Activated B cell treated with CpG ODN at 0.5 μM for 24 hours (primary cell): ENCODE measurements at regions of chr11 and their contacts with region 1.

Region 1: DNA sequence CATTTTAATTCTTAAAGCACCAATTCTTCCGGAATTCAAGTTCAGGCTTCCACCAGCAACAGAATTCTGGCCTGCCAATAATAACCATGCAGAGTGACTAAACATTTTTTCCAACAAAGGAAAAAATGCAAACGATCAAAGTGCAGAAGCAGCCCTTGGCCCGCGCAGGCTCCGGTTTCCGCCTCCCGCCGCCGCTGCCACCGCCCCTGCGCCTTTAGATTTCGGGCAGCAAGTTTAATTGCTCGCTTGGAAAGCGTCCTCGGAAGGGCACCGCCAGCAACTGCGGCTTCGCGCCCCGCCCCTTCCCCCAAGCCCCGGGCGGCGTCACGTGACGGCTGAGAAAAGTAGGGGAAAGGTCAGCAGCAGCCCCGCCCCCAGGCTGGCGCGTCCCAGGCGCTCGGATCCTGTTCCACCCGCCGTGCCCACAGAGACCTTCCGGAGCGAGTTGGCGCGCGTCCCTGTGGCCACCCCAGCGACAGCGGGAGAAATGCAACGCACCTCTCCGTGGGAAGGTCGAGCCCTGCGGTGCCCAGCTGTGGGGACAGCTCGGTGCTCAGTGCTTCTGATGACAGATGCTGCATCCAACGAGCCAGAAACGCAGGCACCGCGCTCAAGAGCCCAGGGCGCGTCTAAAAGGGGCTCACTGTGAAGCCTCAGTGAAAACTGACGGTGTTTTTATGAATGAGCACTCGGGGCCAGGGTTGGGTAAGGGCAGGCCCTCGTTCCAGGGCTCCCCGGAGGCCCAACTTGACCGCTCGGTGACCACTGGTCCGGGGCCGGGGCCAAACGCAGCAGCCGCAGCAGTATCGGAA is 2.5 kb downstream of the CPT1A start:
- DNase-seq: peak; percentile 94
- ATAC-seq: peak; percentile 62
- H3K4me3 Mint-ChIP-seq: peak overlapping the region; percentile 85
- H3K27ac Mint-ChIP-seq: peak overlapping the region; percentile 91
- H3K4me1 Mint-ChIP-seq: peaks cover 54% of the 10 kb centered on the region
- H3K27me3 Mint-ChIP-seq: no peaks in the 10 kb centered on the region
- CTCF ChIP-seq: no peak

Region 2: DNA sequence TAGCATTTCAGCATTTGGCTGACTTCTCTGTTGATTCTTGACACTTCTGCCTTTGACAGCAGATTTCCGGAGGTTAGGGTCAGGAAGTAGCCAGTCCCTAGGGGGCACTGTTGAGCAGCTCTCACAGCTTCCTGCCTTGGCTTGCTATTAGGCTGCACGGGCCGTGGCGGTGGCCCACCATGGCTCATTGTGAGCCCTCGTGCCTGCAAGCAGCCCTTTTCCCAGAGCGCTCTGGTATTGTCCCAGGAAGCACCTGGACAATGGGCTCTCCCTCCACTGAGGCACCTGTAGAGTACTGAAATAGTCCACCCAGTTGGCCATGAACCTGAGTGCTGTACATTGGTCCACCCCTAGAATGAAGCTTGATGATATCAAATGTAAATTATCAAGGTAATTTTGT is 255.2 kb before region 1 on chr11:
- CTCF ChIA-PET with region 1: interaction called, 23 read pairs
- POLR2A ChIA-PET with region 1: interaction called, 3 read pairs
- intact Hi-C with region 1: loop called (anchors 1 kb)
- DNase-seq: peak; percentile 33
- ATAC-seq: peak; percentile 64
- H3K4me3 Mint-ChIP-seq: no peak overlapping the region
- H3K27ac Mint-ChIP-seq: no peak overlapping the region
- H3K4me1 Mint-ChIP-seq: peaks cover 16% of the 10 kb centered on the region
- H3K27me3 Mint-ChIP-seq: no peaks in the 10 kb centered on the region
- CTCF ChIP-seq: peak; percentile 27

Region 3: GRCh38 chr11:68617925-68618809 is 221.1 kb before region 1 on chr11:
- CTCF ChIA-PET with region 1: no interaction called
- POLR2A ChIA-PET with region 1: no interaction called
- intact Hi-C with region 1: no loop called
- DNase-seq: no peak
- ATAC-seq: no peak
- H3K4me3 Mint-ChIP-seq: no peak overlapping the region
- H3K27ac Mint-ChIP-seq: no peak overlapping the region
- H3K4me1 Mint-ChIP-seq: no peaks in the 10 kb centered on the region
- H3K27me3 Mint-ChIP-seq: no peaks in the 10 kb centered on the region
- CTCF ChIP-seq: no peak

Region 4: GRCh38 chr11:68751004-68751856 is 88.0 kb before region 1 on chr11 and contains the start of gene TESMIN:
- CTCF ChIA-PET with region 1: interaction called, 7 read pairs
- POLR2A ChIA-PET with region 1: interaction called, 3 read pairs
- intact Hi-C with region 1: loop called (anchors 1 kb)
- DNase-seq: peak; percentile 90
- ATAC-seq: peak; percentile 99
- H3K4me3 Mint-ChIP-seq: peak within 1 kb of the TSS; percentile 77
- H3K27ac Mint-ChIP-seq: no peak within 1 kb of the TSS
- H3K4me1 Mint-ChIP-seq: peaks cover 11% of the 10 kb centered on the region
- H3K27me3 Mint-ChIP-seq: no peaks in the 10 kb centered on the region
- CTCF ChIP-seq: no peak
- total RNA-seq, gene TESMIN: 1.8 and 3.0 TPM in 2 replicates

Region 5: DNA sequence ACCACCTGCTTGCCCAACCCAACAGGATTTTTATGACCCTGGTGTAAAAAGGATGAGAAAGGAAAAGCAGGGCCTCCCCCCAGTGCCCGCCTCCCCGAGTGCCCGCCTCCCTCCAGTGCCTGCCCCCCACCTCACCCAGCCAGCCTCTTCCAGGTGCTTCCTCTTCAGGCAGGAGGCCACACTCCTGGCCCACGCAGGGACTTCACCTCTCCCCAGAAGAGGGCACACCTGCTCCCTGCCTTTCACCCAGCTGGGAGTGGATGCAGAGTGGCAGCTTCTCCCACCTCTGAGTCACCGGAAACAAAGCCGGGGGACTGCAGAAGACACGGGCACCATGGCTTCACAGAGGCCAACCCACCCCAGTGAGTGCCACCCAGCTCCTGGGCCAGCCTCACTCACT is 13.7 kb before region 1 on chr11:
- CTCF ChIA-PET with region 1: interaction called, 41 read pairs
- POLR2A ChIA-PET with region 1: interaction called, 17 read pairs
- intact Hi-C with region 1: loop called (anchors 1 kb)
- DNase-seq: peak; percentile 50
- ATAC-seq: peak; percentile 77
- H3K4me3 Mint-ChIP-seq: no peak overlapping the region
- H3K27ac Mint-ChIP-seq: no peak overlapping the region
- H3K4me1 Mint-ChIP-seq: peaks cover 45% of the 10 kb centered on the region
- H3K27me3 Mint-ChIP-seq: no peaks in the 10 kb centered on the region
- CTCF ChIP-seq: no peak

Region 6: GRCh38 chr11:69040581-69041260 is 201.5 kb after region 1 on chr11:
- CTCF ChIA-PET with region 1: no interaction called
- POLR2A ChIA-PET with region 1: no interaction called
- intact Hi-C with region 1: no loop called
- DNase-seq: no peak
- ATAC-seq: peak; percentile 58
- H3K4me3 Mint-ChIP-seq: no peak overlapping the region
- H3K27ac Mint-ChIP-seq: peak overlapping the region; percentile 12
- H3K4me1 Mint-ChIP-seq: peaks cover 14% of the 10 kb centered on the region
- H3K27me3 Mint-ChIP-seq: peaks cover 15% of the 10 kb centered on the region
- CTCF ChIP-seq: no peak

Region 7: GRCh38 chr11:69055598-69056516 is 216.6 kb after region 1 on chr11:
- CTCF ChIA-PET with region 1: no interaction called
- POLR2A ChIA-PET with region 1: interaction called, 5 read pairs
- intact Hi-C with region 1: loop called (anchors 1 kb)
- DNase-seq: peak; percentile 78
- ATAC-seq: peak; percentile 87
- H3K4me3 Mint-ChIP-seq: peak overlapping the region; percentile 69
- H3K27ac Mint-ChIP-seq: peak overlapping the region; percentile 86
- H3K4me1 Mint-ChIP-seq: peaks cover 58% of the 10 kb centered on the region
- H3K27me3 Mint-ChIP-seq: no peaks in the 10 kb centered on the region
- CTCF ChIP-seq: no peak

Region 8: DNA sequence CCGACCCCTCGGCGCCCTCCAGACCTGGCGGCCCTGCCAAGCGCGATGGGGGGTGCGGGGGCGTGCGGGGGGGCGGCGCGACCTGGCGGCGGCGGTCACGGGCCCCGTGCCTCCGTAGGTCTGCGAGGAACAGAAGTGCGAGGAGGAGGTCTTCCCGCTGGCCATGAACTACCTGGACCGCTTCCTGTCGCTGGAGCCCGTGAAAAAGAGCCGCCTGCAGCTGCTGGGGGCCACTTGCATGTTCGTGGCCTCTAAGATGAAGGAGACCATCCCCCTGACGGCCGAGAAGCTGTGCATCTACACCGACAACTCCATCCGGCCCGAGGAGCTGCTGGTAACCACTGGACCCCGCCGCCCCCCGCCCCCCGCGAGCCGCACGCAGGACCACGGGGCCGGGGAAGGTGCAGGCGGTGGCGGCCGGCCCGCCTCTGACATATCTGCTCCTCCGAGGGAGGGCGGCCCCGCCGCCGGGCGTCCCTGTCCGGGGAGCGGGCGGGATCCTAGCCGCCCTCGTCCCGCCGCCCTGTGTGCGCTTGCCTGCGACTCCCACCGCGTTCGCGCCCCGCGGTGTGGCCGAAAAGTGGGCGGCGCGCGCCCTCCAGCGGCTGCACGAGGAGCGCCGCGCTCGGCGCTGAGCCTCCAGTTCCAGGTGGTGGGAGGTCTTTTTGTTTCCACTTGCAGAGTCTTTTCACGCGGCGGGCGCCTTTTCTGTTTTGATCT is 803.8 kb after region 1 on chr11:
- CTCF ChIA-PET with region 1: no interaction called
- POLR2A ChIA-PET with region 1: no interaction called
- intact Hi-C with region 1: loop called (anchors 5 kb)
- DNase-seq: peak; percentile 86
- ATAC-seq: peak; percentile 80
- H3K4me3 Mint-ChIP-seq: peak overlapping the region; percentile 83
- H3K27ac Mint-ChIP-seq: no peak overlapping the region
- H3K4me1 Mint-ChIP-seq: peaks cover 32% of the 10 kb centered on the region
- H3K27me3 Mint-ChIP-seq: peaks cover 11% of the 10 kb centered on the region
- CTCF ChIP-seq: peak; percentile 68